Ascending aorta (tissue), 2 donors: ENCODE measurements at regions of chr22 and their contacts with region 1.

Region 1: GRCh38 chr22:30763815-30764686 is 69.4 kb downstream of the OSBP2 start:
- DNase-seq: no peak
- H3K4me3 ChIP-seq: no peak overlapping the region
- H3K27ac ChIP-seq: no peak overlapping the region
- H3K4me1 ChIP-seq: no peaks in the 10 kb centered on the region
- H3K27me3 ChIP-seq: no peaks in the 10 kb centered on the region
- CTCF ChIP-seq: peak; percentile 40 to 62 (median 50)

Region 2: GRCh38 chr22:30920407-30920806 is 156.4 kb after region 1 on chr22:
- intact Hi-C with region 1: loop called (anchors 1 kb)
- DNase-seq: peak in 1 of 2 donors; percentile 82
- H3K4me3 ChIP-seq: peak overlapping the region in 1 of 2 donors; percentile 64
- H3K27ac ChIP-seq: no peak overlapping the region
- H3K4me1 ChIP-seq: peaks cover 0 to 3% of the 10 kb centered on the region in 2 donors
- H3K27me3 ChIP-seq: no peaks in the 10 kb centered on the region
- CTCF ChIP-seq: peak; percentile 83 to 96 (median 88)

Region 3: GRCh38 chr22:31148953-31149627 is 385.0 kb after region 1 on chr22:
- intact Hi-C with region 1: loop called (anchors 5 kb)
- DNase-seq: peak in 1 of 2 donors; percentile 87
- H3K4me3 ChIP-seq: no peak overlapping the region
- H3K27ac ChIP-seq: peak overlapping the region; percentile 71 to 81
- H3K4me1 ChIP-seq: peaks cover 5 to 13% of the 10 kb centered on the region in 2 donors
- H3K27me3 ChIP-seq: no peaks in the 10 kb centered on the region
- CTCF ChIP-seq: peak; percentile 90 to 93 (median 90)